HEK293 (cell line): ENCODE measurements at regions of chr9 and their contacts with region 1.

Region 1: DNA sequence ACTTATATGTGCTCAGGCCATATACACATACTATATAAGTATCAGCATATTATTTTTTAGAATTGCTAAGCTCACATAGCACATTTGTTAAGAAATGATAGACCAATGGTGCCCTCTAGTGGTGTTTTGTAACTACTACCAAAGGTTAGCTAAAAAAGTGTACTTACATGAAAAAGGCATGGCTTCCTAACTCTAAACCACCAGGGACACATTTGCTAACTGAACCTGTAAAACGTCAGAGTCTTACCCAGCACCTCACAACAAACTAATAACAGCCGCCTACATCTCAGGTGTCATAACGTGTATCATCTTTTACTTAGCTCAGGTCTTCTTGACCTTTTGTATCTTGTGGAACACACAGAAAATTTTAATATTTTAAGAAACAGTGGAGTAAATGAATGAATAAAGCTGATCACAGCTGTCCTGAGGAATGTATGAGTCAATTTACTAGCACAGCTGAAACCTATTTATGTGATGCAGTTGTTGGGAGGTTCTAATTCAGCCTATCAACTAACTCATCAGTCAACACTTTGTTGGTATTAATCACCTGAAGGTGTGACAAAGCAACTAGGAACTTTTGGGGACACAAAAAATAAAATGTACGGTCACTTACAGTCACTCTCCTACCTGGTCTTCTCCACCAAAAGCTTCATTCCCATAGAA is 72.9 kb downstream of the BAAT start:
- H3K4me3 ChIP-seq: no peak overlapping the region
- H3K27ac ChIP-seq: no peak overlapping the region
- H3K4me1 ChIP-seq: no peaks in the 10 kb centered on the region
- CTCF ChIP-seq: 0 out of 2 replicates have a peak, but pooled peaks have one; percentile 22

Region 2: GRCh38 chr9:100601216-100601615 is 710.7 kb before region 1 on chr9:
- CTCF ChIA-PET with region 1: interaction called, 65 read pairs
- POLR2A ChIA-PET with region 1: no interaction called
- H3K4me3 ChIP-seq: no peak overlapping the region
- H3K27ac ChIP-seq: no peak overlapping the region
- H3K4me1 ChIP-seq: no peaks in the 10 kb centered on the region; the same call in 1 of the 2 replicates
- CTCF ChIP-seq: peak; percentile 18; the same call in 1 of the 2 replicates

Region 3: GRCh38 chr9:100714372-100715099 is 597.4 kb before region 1 on chr9:
- CTCF ChIA-PET with region 1: interaction called, 21 read pairs
- POLR2A ChIA-PET with region 1: no interaction called
- H3K4me3 ChIP-seq: no peak overlapping the region
- H3K27ac ChIP-seq: no peak overlapping the region
- H3K4me1 ChIP-seq: no peaks in the 10 kb centered on the region
- CTCF ChIP-seq: 0 out of 2 replicates have a peak, but pooled peaks have one; percentile 22

Region 4: GRCh38 chr9:101087426-101087825 is 224.5 kb before region 1 on chr9:
- CTCF ChIA-PET with region 1: no interaction called
- POLR2A ChIA-PET with region 1: no interaction called
- H3K4me3 ChIP-seq: no peak overlapping the region
- H3K27ac ChIP-seq: no peak overlapping the region
- H3K4me1 ChIP-seq: no peaks in the 10 kb centered on the region
- CTCF ChIP-seq: no peak

Region 5: DNA sequence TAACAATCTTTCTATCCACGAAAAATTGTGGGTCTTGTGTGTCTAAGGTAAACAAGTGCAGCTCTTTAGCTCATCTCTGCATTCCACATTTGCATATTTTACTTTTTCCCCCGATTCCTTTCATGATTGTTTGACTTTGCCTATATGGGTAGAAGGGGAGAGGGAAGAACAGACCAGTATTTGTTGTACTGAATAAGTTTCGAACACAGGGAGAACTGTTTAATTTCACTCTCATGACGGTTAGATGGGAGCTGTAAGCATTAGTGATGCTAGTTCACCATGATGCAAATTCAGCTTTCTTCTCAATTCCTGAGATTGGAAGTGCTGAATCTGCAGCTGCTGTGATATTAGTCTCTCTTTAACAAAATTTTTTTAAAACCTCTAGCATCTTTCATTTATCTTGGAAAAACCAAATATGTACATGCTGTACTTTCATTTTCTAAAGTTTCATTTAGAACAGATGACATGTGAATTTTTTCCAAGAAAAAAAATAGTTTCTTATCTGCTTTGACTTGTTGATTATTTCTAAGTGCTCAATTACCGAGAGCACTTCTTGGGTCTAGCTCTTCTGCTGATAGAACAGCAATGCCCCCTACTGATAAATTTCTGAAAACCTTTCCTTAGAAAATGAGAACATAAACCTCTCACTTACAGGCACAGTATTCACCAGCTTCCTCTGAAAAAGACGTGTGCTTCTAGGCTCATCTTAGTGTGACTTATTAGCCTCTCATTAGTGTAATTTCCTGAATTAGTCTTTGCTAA is 76.6 kb before region 1 on chr9:
- CTCF ChIA-PET with region 1: interaction called, 14 read pairs
- POLR2A ChIA-PET with region 1: no interaction called
- H3K4me3 ChIP-seq: no peak overlapping the region
- H3K27ac ChIP-seq: no peak overlapping the region
- H3K4me1 ChIP-seq: no peaks in the 10 kb centered on the region
- CTCF ChIP-seq: no peak

Region 6: DNA sequence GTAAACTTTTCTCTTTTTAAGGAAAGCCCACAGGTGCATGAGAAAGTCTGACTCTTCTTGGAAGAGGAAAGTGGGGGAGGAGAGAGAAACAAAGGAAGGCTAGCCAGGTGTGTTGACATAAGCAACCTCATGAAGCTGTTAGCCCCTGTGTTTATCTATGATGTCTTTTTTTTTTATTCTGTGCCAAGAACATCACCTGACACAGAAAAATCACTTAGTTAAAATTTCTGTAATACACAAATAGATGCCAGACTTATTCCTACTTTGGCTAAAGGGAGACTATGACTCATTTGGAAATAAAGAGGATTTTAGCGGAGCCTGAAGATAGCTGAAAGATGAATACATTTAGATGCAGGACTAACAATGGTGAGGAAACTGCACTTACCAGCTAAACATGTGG is 14.6 kb after region 1 on chr9:
- CTCF ChIA-PET with region 1: interaction called, 14 read pairs
- POLR2A ChIA-PET with region 1: no interaction called
- H3K4me3 ChIP-seq: no peak overlapping the region
- H3K27ac ChIP-seq: no peak overlapping the region
- H3K4me1 ChIP-seq: no peaks in the 10 kb centered on the region
- CTCF ChIP-seq: no peak